Activated T-helper 1 cell treated with anti-CD3 and anti-CD28 coated beads, Interleukin-12 subunit alpha, Interleukin-12 subunit beta, Interleukin-2, Interleukin-4 antibody, amounts not matched to agents 30 ng/mL and 10 ng/mL and 1 ng/mL, durations not matched to agents 14 hours and 24 hours and 36 hours (primary cell): ENCODE measurements at regions of chr11 and their contacts with region 1.

Region 1: GRCh38 chr11:66268283-66268951 is at the start of gene RAB1B:
- DNase-seq: peak; percentile 100
- H3K4me3 Mint-ChIP-seq: peak within 1 kb of the TSS; percentile 90
- H3K27ac Mint-ChIP-seq: peak within 1 kb of the TSS; percentile 90
- H3K4me1 Mint-ChIP-seq: peaks cover 35% of the 10 kb centered on the region
- H3K27me3 Mint-ChIP-seq: peaks cover 2% of the 10 kb centered on the region
- total RNA-seq, gene RAB1B: 123 and 124 TPM in 2 replicates

Region 2: DNA sequence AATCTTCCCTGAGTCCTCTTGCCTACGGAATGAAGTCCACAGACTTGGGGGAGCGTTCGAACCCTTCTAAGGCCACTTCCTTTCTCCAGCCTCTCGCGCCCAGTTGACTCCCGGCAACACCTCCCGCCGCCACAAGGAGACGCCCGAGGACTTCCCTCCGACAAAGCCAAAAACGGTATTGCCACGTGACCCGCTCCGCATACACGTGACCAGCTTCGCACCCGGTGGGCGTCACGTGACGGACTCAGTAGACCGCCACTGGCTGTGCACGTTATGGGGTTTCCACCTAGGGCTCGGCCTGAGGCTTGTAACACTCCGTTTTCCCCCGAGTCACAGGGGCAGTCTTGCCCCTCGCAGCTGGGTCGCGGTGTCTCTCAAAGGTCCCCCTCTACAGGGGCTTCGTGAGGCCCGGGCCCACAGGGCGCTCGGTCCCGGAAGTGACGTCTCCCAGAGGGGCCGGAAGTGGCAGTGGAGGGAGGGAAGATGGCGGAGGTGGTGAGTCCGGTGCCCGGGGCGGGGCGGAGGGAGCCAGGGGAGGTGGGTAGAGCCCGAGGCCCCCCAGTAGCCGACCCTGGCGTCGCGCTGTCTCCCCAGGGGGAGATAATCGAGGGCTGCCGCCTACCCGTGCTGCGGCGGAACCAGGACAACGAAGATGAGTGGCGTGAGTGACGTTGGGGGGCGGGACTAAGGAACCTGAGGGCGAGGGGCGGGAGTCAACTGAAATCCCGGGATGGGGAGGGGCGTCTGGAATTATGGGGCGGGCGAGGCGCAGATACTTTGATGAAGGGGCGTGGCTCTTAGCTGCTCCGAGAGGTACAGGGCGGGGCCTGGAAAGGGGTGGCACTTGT is 556.4 kb before region 1 on chr11 and contains the start of gene KAT5:
- intact Hi-C with region 1: loop called (anchors 5 kb)
- DNase-seq: peak; percentile 98
- H3K4me3 Mint-ChIP-seq: peak within 1 kb of the TSS; percentile 96
- H3K27ac Mint-ChIP-seq: peak within 1 kb of the TSS; percentile 98
- H3K4me1 Mint-ChIP-seq: peaks cover 29% of the 10 kb centered on the region
- H3K27me3 Mint-ChIP-seq: no peaks in the 10 kb centered on the region
- total RNA-seq, gene KAT5: 68.1 and 75.0 TPM in 2 replicates

Region 3: GRCh38 chr11:65961232-65961901 is 307.1 kb before region 1 on chr11 and contains the start of gene SART1:
- intact Hi-C with region 1: loop called (anchors 5 kb)
- DNase-seq: peak; percentile 94
- H3K4me3 Mint-ChIP-seq: peak within 1 kb of the TSS; percentile 98
- H3K27ac Mint-ChIP-seq: peak within 1 kb of the TSS; percentile 99
- H3K4me1 Mint-ChIP-seq: peaks cover 41% of the 10 kb centered on the region
- H3K27me3 Mint-ChIP-seq: no peaks in the 10 kb centered on the region
- total RNA-seq, gene SART1: 110 TPM in 2 replicates

Region 4: DNA sequence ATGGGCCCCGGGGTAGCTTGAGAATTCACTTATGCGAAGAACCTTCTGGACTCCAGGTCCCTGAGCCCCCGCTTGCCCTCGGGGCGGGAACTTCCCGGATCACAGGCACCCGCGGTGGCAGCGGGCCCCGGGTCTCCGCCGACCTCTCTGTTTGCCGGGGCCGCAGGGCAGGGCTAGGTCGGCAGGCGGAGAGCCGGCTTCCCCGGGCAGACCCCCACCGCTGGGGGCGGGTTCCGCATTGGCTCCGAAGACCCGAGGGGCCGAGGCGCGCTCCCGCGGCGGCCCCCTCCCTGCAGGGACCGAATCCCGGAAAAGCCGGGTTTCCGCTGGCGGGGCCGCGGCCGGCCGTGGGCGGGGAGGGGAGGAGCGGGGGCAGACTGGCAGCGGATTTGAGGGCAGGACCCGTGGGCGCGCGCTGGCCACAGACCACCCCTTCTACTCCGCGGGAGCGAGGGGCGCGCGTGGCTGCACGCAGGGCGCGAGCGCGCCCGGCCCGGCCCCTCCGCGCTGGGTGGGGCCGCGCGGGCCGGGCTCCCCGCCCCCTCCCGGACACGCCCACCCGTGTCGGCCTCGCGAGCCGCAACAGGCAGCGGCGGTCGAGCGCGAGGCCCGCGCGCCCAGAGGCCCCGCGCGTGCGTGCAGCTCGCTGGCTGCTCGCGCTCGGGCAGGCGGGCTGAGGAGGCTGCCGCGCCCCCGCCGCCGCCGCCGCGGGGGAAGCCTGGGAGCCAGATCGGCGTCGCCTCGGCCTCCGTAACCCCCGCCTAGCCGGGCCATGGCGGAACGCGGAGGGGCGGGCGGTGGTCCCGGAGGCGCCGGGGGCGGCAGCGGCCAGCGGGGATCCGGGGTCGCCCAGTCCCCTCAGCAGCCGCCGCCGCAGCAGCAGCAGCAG is 198.5 kb before region 1 on chr11 and contains the start of gene PACS1:
- intact Hi-C with region 1: loop called (anchors 5 kb)
- DNase-seq: peak; percentile 78
- H3K4me3 Mint-ChIP-seq: peak within 1 kb of the TSS; percentile 95
- H3K27ac Mint-ChIP-seq: peak within 1 kb of the TSS; percentile 91
- H3K4me1 Mint-ChIP-seq: peaks cover 70% of the 10 kb centered on the region
- H3K27me3 Mint-ChIP-seq: no peaks in the 10 kb centered on the region
- total RNA-seq, gene PACS1: 80.4 and 89.5 TPM in 2 replicates

Region 5: GRCh38 chr11:66282468-66283386 is 14.3 kb after region 1 on chr11:
- intact Hi-C with region 1: loop called (anchors 1 kb)
- DNase-seq: peak; percentile 98
- H3K4me3 Mint-ChIP-seq: no peak overlapping the region
- H3K27ac Mint-ChIP-seq: peak overlapping the region; percentile 40
- H3K4me1 Mint-ChIP-seq: peaks cover 29% of the 10 kb centered on the region
- H3K27me3 Mint-ChIP-seq: peaks cover 10% of the 10 kb centered on the region

Region 6: DNA sequence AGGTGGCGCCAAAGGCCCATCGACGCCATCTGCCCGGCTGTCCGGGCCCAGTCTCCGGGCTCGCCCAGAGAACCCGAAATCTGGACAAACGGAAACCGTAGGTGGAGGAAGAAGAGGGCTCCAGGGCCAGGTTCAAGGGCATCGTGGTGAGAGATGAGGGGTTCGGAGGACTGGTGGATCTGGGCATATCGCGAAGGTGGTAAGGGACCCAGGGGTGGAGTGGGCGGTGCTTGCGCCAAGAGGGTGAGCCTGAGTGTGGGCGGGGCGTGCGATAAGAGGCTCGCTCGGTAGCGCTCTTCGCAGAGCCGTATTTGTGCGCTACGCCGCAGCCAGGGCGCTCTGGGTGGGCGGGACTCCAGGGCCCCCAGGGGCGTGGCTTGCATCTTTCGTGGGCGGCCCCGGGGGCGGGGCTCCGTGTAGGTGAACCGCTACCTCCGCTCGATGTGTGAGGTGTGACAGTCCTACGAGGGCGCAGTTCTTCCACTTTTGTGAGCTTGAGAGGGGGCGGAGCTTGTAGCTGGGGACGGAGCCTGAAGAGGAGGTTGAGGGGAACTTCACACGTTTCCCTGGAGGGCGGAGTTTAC is 43.6 kb after region 1 on chr11:
- intact Hi-C with region 1: loop called (anchors 1 kb)
- DNase-seq: peak; percentile 93
- H3K4me3 Mint-ChIP-seq: peak overlapping the region; percentile 95
- H3K27ac Mint-ChIP-seq: peak overlapping the region; percentile 94
- H3K4me1 Mint-ChIP-seq: peaks cover 14% of the 10 kb centered on the region
- H3K27me3 Mint-ChIP-seq: peaks cover 3% of the 10 kb centered on the region

Region 7: DNA sequence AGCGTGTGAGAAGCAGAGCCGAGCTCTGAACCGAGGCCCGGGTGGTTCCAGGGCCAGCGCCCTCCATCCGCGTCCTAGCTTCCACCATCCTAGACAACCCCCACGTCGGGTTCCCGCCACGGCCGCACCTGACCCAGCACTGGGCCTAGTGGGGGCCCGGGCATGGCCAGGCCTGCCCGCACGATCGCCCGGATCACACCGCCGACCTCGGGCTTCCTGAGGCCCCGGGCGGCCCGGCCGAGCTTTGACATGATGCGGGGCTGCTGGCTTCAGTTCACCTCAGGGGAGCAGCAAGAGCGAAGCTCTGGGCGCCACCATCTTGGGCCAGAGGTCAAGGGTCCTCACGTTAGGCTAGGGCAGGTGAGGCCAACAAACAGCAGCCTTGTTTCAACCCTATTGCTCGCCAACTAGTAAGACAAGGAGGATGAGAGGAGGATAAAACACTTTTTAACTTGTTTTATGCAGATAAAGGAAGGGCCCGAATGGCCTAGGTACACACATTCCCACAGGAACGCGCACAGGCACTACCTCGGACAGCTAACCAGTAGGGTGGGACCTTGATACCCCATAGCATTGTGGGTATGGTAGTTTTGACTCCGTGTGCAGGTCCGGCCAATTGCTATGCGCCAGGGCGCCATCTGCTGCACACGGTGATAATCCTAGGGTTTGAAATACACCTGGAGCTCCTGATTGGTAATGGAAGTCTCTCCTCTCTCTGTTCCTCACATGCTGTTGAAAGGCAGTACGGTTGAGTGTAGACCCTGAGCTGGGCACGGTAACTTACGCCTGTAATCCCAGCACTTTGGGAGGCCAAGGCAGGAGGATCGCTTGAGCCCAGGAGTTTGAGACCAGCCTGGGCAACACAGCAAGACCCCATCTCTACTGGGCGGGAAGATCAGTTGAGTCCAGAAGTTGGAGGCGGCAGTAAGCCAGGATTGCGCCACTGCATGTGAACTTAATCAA is 170.4 kb after region 1 on chr11 and contains the start of gene MRPL11:
- intact Hi-C with region 1: loop called (anchors 2 kb)
- DNase-seq: peak; percentile 83
- H3K4me3 Mint-ChIP-seq: peak within 1 kb of the TSS; percentile 87
- H3K27ac Mint-ChIP-seq: peak within 1 kb of the TSS; percentile 95
- H3K4me1 Mint-ChIP-seq: peaks cover 17% of the 10 kb centered on the region
- H3K27me3 Mint-ChIP-seq: no peaks in the 10 kb centered on the region
- total RNA-seq, gene MRPL11: 93.0 and 93.6 TPM in 2 replicates